ENCODE measurements at regions of chr4 and their contacts with region 1.

Region 1: DNA sequence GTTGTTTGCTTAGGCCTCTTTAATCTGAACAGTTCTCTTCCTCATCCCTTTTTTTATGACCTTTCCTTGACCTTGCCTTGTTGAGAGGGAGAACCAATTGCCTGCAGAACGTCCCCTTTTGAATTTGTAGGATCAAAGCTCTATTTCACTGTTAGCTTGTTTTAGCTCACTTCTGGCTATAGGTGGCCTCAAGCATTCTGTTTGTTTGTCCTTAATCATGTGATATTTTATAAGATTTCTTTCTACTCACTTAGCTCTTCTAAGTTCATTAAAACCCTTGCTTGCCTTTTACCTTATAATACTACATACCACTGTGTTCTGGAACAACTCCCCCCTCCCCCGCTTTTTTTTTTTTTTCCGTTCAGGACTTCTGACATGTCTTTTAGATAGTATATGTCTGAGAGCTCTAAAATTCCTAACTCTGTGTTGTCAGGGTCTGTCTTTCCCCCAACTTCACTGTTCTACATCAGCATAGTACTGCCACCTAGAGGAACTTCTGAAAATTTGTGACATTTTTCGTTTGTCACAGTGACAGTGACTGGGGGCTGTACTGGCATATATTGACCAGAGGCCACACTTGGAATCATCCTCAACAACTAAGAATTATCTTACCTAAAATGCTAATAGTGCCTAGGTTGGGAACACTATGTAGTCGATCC is 128.5 kb downstream of the LARP7 start:
- DNase-seq: peak; percentile 71

Region 2: GRCh38 chr4:112726031-112726430 is 39.4 kb before region 1 on chr4:
- CTCF ChIA-PET with region 1: interaction called, 10 read pairs
- POLR2A ChIA-PET with region 1: no interaction called
- DNase-seq: no peak

Region 3: GRCh38 chr4:112938461-112939058 is 173.1 kb after region 1 on chr4:
- CTCF ChIA-PET with region 1: interaction called, 13 read pairs
- POLR2A ChIA-PET with region 1: no interaction called
- DNase-seq: peak; percentile 25

Measured in HEK293T (cell line).